CD8-positive, alpha-beta T cell (primary cell): ENCODE measurements at regions of chr17 and their contacts with region 1.

Region 1: DNA sequence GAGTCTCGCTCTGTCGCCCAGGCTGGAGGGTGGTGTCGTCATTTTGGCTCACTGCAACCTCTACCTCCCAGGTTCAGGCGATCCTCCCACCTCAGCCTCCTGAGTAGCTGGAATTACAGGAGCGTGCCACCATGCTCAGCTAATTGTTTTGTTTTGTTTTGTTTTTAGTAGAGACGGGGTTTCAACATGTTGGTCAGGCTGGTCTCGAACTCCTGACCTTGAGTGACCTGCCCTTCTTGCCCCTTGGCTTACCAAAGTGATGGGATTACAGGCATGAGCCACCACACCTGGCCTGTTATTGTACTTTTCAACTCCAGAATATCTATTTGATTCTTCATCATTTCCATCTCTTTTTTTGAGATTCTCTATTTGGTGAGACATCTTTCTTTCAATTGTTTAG is 9.0 kb upstream of the ADORA2B start:
- DNase-seq: no peak
- ATAC-seq: no peak
- H3K4me3 ChIP-seq: no peak overlapping the region
- H3K4me3 Mint-ChIP-seq: no peak overlapping the region
- H3K27ac ChIP-seq: no peak overlapping the region
- H3K27ac Mint-ChIP-seq: no peak overlapping the region
- H3K4me1 ChIP-seq: no peaks in the 10 kb centered on the region
- H3K4me1 Mint-ChIP-seq: no peaks in the 10 kb centered on the region
- H3K27me3 ChIP-seq: no peaks in the 10 kb centered on the region
- H3K27me3 Mint-ChIP-seq: peaks cover 3% of the 10 kb centered on the region
- CTCF ChIP-seq: no peak

Region 2: GRCh38 chr17:15952916-15953790 is 17.3 kb after region 1 on chr17:
- CTCF ChIA-PET with region 1: no interaction called
- POLR2A ChIA-PET with region 1: no interaction called
- intact Hi-C with region 1: loop called in 1 of 2 experiments (anchors 1 kb)
- DNase-seq: no peak
- ATAC-seq: no peak
- H3K4me3 ChIP-seq: no peak overlapping the region
- H3K4me3 Mint-ChIP-seq: no peak overlapping the region
- H3K27ac ChIP-seq: no peak overlapping the region
- H3K27ac Mint-ChIP-seq: no peak overlapping the region
- H3K4me1 ChIP-seq: no peaks in the 10 kb centered on the region
- H3K4me1 Mint-ChIP-seq: no peaks in the 10 kb centered on the region
- H3K27me3 ChIP-seq: no peaks in the 10 kb centered on the region
- H3K27me3 Mint-ChIP-seq: no peaks in the 10 kb centered on the region
- CTCF ChIP-seq: no peak